Vagina (tissue), 2 donors: ENCODE measurements at regions of chr3 and their contacts with region 1.

Region 1: GRCh38 chr3:64685800-64686445 is 1.9 kb downstream of the ADAMTS9 start:
- DNase-seq: peak in 1 of 2 donors; percentile 97
- H3K4me3 ChIP-seq: peak overlapping the region; percentile 62 to 77
- H3K27ac ChIP-seq: peak overlapping the region; percentile 97
- H3K4me1 ChIP-seq: peaks cover 23% of the 10 kb centered on the region
- H3K27me3 ChIP-seq: no peaks in the 10 kb centered on the region
- CTCF ChIP-seq: peak in 1 of 3 experiments; percentile 65
- POLR2A ChIP-seq: peak in 1 of 2 donors; percentile 71

Region 2: GRCh38 chr3:64533617-64534317 is 152.2 kb before region 1 on chr3:
- intact Hi-C with region 1: loop called (anchors 10 kb)
- DNase-seq: peak in 1 of 2 donors; percentile 94
- H3K4me3 ChIP-seq: no peak overlapping the region
- H3K27ac ChIP-seq: peak overlapping the region; percentile 54
- H3K4me1 ChIP-seq: peaks cover 16% of the 10 kb centered on the region
- H3K27me3 ChIP-seq: no peaks in the 10 kb centered on the region
- CTCF ChIP-seq: peak; percentile 86 to 90 (median 88)
- POLR2A ChIP-seq: no peak

Region 3: GRCh38 chr3:64612082-64612860 is 73.7 kb before region 1 on chr3:
- intact Hi-C with region 1: loop called (anchors 2 kb)
- DNase-seq: no peak
- H3K4me3 ChIP-seq: no peak overlapping the region
- H3K27ac ChIP-seq: peak overlapping the region; percentile 70
- H3K4me1 ChIP-seq: no peaks in the 10 kb centered on the region
- H3K27me3 ChIP-seq: no peaks in the 10 kb centered on the region
- CTCF ChIP-seq: no peak
- POLR2A ChIP-seq: no peak

Region 4: DNA sequence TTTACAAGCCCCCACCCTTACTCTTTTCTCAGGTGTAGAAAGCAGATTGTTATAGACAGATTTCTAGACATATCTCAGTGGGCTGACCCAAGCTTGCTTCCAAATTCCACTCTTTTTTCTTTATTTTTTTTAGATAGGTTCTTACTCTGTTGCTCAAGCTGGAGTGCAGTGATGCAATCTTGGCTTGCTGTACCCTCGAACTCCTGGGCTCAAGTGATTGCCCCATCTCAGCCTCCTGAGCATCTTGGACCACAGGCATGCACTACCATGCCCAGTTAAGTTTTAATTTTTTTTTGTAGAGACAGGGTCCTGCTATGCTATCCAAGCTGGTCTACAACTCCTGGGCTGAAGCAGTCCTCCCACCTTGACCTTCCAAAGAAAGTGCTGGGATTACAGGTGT is 55.4 kb after region 1 on chr3:
- intact Hi-C with region 1: no loop called
- DNase-seq: no peak
- H3K4me3 ChIP-seq: no peak overlapping the region
- H3K27ac ChIP-seq: peak overlapping the region; percentile 63
- H3K4me1 ChIP-seq: peaks cover 27% of the 10 kb centered on the region
- H3K27me3 ChIP-seq: no peaks in the 10 kb centered on the region
- CTCF ChIP-seq: no peak
- POLR2A ChIP-seq: no peak

Region 5: GRCh38 chr3:64945171-64945729 is 259.3 kb after region 1 on chr3:
- intact Hi-C with region 1: loop called (anchors 5 kb)
- DNase-seq: no peak
- H3K4me3 ChIP-seq: no peak overlapping the region
- H3K27ac ChIP-seq: peak overlapping the region; percentile 65
- H3K4me1 ChIP-seq: peaks cover 33% of the 10 kb centered on the region
- H3K27me3 ChIP-seq: no peaks in the 10 kb centered on the region
- CTCF ChIP-seq: no peak
- POLR2A ChIP-seq: no peak